ENCODE measurements at regions of chr1 and their contacts with region 1.

Region 1: DNA sequence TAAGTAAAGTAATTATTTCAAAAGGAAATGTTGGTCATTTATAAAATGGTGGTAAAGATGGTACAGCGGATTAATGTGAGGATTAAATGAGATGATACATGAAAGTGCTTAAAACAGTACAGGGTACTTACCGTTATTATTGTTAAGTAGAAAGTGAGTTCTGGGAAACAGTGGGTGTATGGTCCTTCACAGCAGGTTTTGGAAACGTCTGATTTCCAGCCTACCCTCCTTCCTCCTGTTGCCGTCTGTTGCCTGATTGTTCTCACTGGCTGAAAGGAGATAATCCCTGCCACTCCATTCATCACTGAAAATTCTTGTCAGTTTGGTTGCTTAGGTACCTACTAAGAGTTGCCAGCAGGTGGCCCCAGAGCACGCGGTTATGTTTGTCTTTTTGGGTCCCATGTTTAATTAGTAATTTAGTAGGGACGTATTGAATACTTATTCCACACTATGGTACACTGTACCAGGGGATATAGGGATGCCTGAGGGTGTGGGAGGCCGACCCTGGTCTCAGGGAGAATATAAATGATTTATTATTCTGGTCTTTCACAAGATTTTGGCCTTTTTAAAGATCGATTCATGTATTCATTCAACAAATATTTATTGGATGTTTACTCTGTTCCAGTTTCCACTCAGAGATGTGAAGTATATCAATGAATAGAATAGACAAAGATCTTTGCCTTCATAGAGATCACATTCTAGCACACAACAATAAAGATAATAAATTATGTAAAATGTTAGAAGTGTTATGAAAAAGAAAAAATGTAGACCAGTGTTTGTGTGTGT is 30.8 kb upstream of the RPTN start:
- DNase-seq: peak; percentile 65
- H3K4me3 ChIP-seq: peak overlapping the region in 2 of 3 experiments; percentile 43 to 48
- H3K27ac ChIP-seq: no peak overlapping the region
- H3K4me1 ChIP-seq: peaks cover 5% of the 10 kb centered on the region
- H3K27me3 ChIP-seq: peaks cover 0 to 4% of the 10 kb centered on the region in 2 experiments
- CTCF ChIP-seq: peak; percentile 65 to 72
- POLR2A ChIP-seq: no peak

Region 2: DNA sequence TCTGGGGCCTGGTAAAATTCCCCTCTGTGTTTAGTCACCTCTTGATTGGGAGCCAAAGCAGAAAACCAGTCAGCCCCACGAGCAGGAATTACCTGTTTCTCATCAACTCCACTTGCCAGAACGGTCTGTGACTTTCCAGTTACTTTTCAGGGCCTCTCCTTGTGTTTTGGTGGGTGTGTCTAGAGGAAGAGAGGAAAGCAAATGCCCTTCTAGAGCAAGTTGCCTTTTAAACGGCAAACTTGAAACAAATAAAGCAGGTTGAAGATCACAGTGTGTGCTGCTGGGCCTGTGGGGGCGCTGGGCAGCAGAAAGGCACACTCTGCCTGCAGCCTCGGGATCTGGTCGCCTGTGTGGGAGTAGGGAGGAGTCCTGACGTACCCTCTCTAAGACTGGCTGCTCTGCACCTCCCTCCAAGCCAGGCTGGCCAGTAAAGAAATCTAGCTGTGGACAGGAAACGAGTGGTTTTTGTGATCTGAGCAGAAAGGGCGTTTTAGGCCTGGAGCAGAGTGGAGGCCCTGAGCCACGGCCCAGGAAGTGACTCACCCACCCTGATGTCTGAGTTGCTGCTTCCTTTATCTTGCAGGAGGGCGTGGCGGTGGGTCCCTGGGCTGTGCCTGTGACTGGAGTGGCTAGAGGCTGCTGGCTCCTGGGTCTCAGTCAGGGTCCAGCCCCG is 142.0 kb before region 1 on chr1:
- CTCF ChIA-PET with region 1: interaction called, 88 read pairs
- POLR2A ChIA-PET with region 1: no interaction called
- dilution Hi-C with region 1: no loop called
- intact Hi-C with region 1: loop called (anchors 1 kb)
- DNase-seq: peak; percentile 91
- H3K4me3 ChIP-seq: no peak overlapping the region
- H3K27ac ChIP-seq: peak overlapping the region; percentile 25
- H3K4me1 ChIP-seq: peaks cover 18% of the 10 kb centered on the region
- H3K27me3 ChIP-seq: peaks cover 7 to 27% of the 10 kb centered on the region in 2 experiments
- CTCF ChIP-seq: peak; percentile 61 to 80
- POLR2A ChIP-seq: no peak

Region 3: DNA sequence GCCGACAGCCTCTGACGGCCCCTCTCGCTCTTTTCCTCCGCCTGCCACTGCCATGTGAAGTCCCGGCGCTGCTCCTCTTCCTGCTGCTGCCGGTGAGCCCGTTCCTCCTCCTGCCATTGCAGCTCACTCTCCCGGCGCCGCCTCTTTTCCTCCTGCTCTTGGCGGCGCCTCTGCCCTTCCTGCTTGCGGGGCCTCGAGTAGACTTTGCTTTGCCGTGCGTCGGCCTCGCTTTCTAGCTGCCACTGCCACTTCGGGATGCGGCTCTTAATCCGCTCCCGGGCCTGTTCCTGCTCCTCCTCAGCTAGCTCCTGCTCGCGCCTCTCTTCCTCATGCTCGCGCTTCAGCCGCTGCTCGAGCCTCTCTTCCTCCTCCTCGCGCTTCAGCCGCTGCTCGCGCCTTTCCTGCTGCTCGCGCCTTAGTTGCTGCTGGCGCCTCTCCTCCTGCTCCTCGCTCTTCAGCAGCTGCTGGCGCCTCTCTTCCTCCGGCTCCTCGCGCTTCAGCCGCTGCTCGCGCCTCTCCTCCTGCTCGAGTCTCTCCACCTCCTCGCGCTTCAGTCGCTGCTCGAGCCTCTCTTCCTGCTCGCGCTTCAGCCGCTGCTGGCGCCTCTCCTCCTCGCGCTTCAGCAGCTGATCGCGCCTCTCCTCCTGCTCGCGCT is 78.9 kb before region 1 on chr1:
- CTCF ChIA-PET with region 1: interaction called, 20 read pairs
- POLR2A ChIA-PET with region 1: no interaction called
- dilution Hi-C with region 1: no loop called
- intact Hi-C with region 1: no loop called
- DNase-seq: peak; percentile 58
- H3K4me3 ChIP-seq: peak overlapping the region; percentile 19 to 35 (median 33)
- H3K27ac ChIP-seq: no peak overlapping the region
- H3K4me1 ChIP-seq: peaks cover 33% of the 10 kb centered on the region
- H3K27me3 ChIP-seq: peaks cover 75 to 93% of the 10 kb centered on the region in 2 experiments
- CTCF ChIP-seq: no peak
- POLR2A ChIP-seq: no peak

Region 4: GRCh38 chr1:152141974-152142584 is 47.8 kb before region 1 on chr1:
- CTCF ChIA-PET with region 1: interaction called, 56 read pairs
- POLR2A ChIA-PET with region 1: no interaction called
- dilution Hi-C with region 1: no loop called
- intact Hi-C with region 1: loop called (anchors 1 kb)
- DNase-seq: peak; percentile 57
- H3K4me3 ChIP-seq: no peak overlapping the region
- H3K27ac ChIP-seq: no peak overlapping the region
- H3K4me1 ChIP-seq: no peaks in the 10 kb centered on the region
- H3K27me3 ChIP-seq: no peaks in the 10 kb centered on the region
- CTCF ChIP-seq: peak; percentile 63 to 65
- POLR2A ChIP-seq: no peak

Region 5: GRCh38 chr1:152244576-152245273 is 54.9 kb after region 1 on chr1:
- CTCF ChIA-PET with region 1: no interaction called
- POLR2A ChIA-PET with region 1: no interaction called
- dilution Hi-C with region 1: no loop called
- intact Hi-C with region 1: no loop called
- DNase-seq: no peak
- H3K4me3 ChIP-seq: no peak overlapping the region
- H3K27ac ChIP-seq: no peak overlapping the region
- H3K4me1 ChIP-seq: no peaks in the 10 kb centered on the region
- H3K27me3 ChIP-seq: no peaks in the 10 kb centered on the region
- CTCF ChIP-seq: no peak
- POLR2A ChIP-seq: no peak